A673 (cell line): ENCODE measurements at regions of chr12 and their contacts with region 1.

Region 1: GRCh38 chr12:49274396-49275286 is 9.8 kb downstream of the TUBA1C start:
- DNase-seq: no peak
- H3K4me3 ChIP-seq: no peak overlapping the region
- H3K27ac ChIP-seq: no peak overlapping the region
- H3K4me1 ChIP-seq: peaks cover 4% of the 10 kb centered on the region
- H3K27me3 ChIP-seq: no peaks in the 10 kb centered on the region
- CTCF ChIP-seq: no peak

Region 2: DNA sequence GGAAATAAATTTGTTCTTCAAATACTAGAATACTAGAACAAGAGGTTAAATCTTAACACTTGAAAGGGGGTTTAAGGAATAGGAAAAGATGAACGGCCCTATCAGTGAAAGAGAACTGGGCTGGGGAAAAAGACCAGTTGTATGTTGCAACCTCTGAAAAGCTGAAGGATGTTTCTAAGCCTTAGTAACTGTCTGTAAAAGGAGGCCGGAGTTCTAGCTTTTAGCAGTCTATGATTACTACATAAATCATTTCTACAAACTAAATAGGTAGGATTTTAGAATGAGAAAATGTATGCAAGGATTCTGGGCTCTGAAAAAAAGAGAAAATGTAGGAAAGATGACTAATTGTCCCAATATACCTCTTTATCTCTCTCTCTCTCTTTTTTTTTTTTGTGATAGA is 887.6 kb after region 1 on chr12:
- CTCF ChIA-PET with region 1: no interaction called
- POLR2A ChIA-PET with region 1: interaction called, 13 read pairs
- intact Hi-C with region 1: no loop called
- DNase-seq: no peak
- H3K4me3 ChIP-seq: no peak overlapping the region
- H3K27ac ChIP-seq: no peak overlapping the region
- H3K4me1 ChIP-seq: no peaks in the 10 kb centered on the region
- H3K27me3 ChIP-seq: no peaks in the 10 kb centered on the region
- CTCF ChIP-seq: no peak